ENCODE measurements at regions of chr21 and their contacts with region 1.

Region 1: GRCh38 chr21:39313571-39314142 is at the start of gene BRWD1:
- DNase-seq: peak; percentile 82 to 89 (median 87)
- H3K4me3 ChIP-seq: peak within 1 kb of the TSS; percentile 98
- H3K27ac ChIP-seq: peak within 1 kb of the TSS; percentile 94 to 98
- H3K4me1 ChIP-seq: peaks cover 3% of the 10 kb centered on the region
- H3K27me3 ChIP-seq: no peaks in the 10 kb centered on the region
- CTCF ChIP-seq: peak in 2 of 3 donors; percentile 30 to 38
- EP300 ChIP-seq: peak; percentile 46
- POLR2A ChIP-seq: peak; percentile 53
- total RNA-seq, gene BRWD1: 43.5 to 73.0 (median 51.2) TPM

Region 2: DNA sequence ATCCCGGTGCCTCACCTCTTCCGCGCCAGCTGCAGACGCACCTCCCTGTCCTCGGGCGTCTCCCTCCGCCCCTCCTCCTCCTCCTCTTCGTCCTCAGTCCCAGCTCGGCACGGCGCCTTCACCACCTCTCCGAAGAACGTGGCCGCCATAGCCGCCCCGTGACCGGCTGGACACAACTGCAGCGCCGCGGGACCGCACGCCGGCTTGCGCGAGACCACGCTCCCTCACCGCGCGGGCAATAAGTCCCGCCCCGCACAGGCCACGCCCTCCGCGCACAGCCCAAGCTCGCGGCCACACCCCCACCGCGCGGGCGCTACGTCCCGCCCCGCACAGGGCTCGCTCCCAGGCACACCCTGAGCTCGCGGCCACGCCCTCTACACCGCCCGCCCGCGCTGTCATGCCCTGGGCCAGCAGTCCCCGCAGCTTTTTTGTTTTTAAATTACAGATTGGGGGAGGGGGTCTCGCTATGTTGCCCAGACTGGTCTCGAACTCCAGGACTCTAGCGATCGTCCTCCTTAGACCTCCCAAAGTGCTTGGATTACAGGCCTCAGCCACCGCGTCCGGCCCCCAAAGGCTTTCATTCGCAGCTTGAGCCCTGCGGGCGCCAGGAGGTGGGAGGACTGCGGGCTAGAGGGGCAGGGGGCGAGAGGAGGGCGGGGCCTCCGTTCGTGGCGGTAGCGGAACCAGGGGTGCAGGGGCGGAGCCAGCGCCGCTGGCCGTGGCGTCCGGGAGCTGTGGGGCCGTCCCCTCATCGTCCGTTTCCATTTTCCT is 130.2 kb before region 1 on chr21 and contains the start of gene PSMG1:
- intact Hi-C with region 1: loop called in 1 of 4 experiments (anchors 10 kb)
- DNase-seq: peak; percentile 90 to 97 (median 94)
- H3K4me3 ChIP-seq: peak within 1 kb of the TSS; percentile 91
- H3K27ac ChIP-seq: peak within 1 kb of the TSS; percentile 74 to 91
- H3K4me1 ChIP-seq: peaks cover 3% of the 10 kb centered on the region
- H3K27me3 ChIP-seq: no peaks in the 10 kb centered on the region
- CTCF ChIP-seq: no peak
- EP300 ChIP-seq: no peak
- POLR2A ChIP-seq: peak; percentile 47
- total RNA-seq, gene PSMG1: 16.2 to 42.7 (median 32.2) TPM

Region 3: GRCh38 chr21:39349211-39350093 is 35.8 kb after region 1 on chr21:
- intact Hi-C with region 1: loop called in 1 of 4 experiments (anchors 2 kb)
- DNase-seq: peak; percentile 94 to 98 (median 95)
- H3K4me3 ChIP-seq: peak overlapping the region; percentile 53
- H3K27ac ChIP-seq: peak overlapping the region; percentile 95
- H3K4me1 ChIP-seq: peaks cover 3% of the 10 kb centered on the region
- H3K27me3 ChIP-seq: no peaks in the 10 kb centered on the region
- CTCF ChIP-seq: no peak
- EP300 ChIP-seq: no peak
- POLR2A ChIP-seq: no peak

Measured in ovary (tissue), 10 donors.